ENCODE measurements at regions of chr4 and their contacts with region 1.

Region 1: GRCh38 chr4:145107126-145107525 is 9.0 kb downstream of the ABCE1 start:
- H3K4me3 Mint-ChIP-seq: no peak overlapping the region
- H3K27ac Mint-ChIP-seq: no peak overlapping the region
- H3K4me1 Mint-ChIP-seq: peaks cover 6% of the 10 kb centered on the region
- H3K27me3 Mint-ChIP-seq: no peaks in the 10 kb centered on the region

Region 2: DNA sequence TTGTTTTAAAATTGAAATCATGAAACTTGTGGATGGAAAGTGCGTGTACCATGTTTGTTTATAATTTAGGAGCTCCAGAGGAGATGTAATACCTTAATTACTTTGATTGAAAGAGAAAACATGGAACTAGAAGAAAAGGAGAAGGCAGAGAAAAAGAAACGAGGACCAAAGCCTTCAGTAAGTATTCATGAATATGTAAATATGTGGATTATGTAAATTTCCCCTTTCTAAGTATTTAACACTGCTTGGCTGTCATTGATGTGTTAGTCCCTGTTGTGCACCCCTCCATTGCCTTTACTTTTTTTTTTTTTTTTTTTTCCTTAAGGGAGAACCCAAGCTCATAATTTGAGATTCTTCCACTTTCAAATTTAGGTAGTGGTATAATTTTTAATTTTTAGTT is 1557.2 kb before region 1 on chr4:
- intact Hi-C with region 1: loop called (anchors 5 kb)
- H3K4me3 Mint-ChIP-seq: no peak overlapping the region
- H3K27ac Mint-ChIP-seq: no peak overlapping the region
- H3K4me1 Mint-ChIP-seq: no peaks in the 10 kb centered on the region
- H3K27me3 Mint-ChIP-seq: no peaks in the 10 kb centered on the region

Measured in dendritic cell treated with granulocyte-macrophage colony-stimulating factor and Interleukin-4, amounts not matched to agents 40 ng/mL and 50 ng/mL, for 4 days (primary cell).